A549 (cell line): ENCODE measurements at regions of chr3 and their contacts with region 1.

Region 1: DNA sequence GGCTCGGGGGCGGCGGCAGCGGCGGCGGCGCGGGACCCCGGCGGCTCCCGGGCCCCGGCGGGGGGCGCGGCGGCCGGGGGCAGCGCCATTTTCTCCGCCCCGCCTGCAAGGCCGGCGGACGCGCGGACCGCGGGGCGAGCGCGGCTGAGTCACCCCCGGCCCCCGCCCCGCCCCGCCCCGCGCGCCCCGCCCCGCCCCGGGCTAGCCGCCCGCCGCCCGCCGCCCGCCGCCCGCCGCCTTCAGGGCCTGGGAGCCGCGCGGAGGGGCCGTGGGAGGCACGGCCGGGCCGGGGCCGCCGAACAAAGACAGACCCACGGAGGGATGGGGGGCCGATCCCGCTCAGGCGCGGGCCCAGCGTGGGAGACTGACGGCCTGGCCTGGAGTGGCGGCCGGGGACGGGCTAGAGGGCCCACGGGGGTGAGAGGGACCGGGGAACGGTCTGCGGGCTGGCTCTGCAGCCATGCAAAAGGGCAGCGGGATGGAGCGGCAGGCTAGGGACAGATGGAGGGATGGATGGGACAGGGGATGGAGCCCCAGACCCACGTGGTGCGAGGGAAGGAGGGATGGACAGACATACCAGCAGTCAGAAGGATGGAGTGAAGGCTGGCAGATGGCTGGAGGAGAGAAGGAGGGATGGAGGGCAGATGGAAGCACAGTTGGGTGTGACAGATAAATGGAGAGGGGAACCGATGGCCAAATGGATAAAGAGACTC is at the start of gene EIF4E3:
- DNase-seq: peak in 1 of 2 experiments; percentile 54
- ATAC-seq: peak; percentile 51 to 69
- H3K4me3 ChIP-seq: peak within 1 kb of the TSS; percentile 83
- H3K27ac ChIP-seq: peak within 1 kb of the TSS; percentile 82 to 90
- H3K4me1 ChIP-seq: peaks cover 7% of the 10 kb centered on the region
- CTCF ChIP-seq: no peak
- EP300 ChIP-seq: no peak
- POLR2A ChIP-seq: no peak
- RAD21 ChIP-seq: no peak
- polyA plus RNA-seq, gene EIF4E3: 4.6 and 5.5 TPM in 2 replicates

Region 2: DNA sequence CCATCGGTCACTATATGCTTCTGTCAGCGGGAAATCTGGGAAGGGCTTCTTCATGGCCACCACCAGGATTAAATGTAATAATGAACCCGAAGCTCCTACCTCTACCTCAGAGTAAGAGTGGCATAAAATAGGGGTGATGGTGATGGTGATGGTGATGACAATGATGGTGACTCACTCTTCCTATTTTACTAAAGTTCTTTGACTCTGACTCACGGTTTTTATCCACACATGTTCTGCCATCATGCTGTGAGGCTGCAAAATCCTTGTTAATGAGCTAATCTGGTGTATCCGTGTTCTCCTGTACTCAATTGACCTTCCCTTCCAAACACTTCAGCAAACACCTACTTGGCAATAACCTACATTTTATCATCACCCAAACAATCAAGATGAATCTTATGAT is 123.6 kb before region 1 on chr3:
- CTCF ChIA-PET with region 1: no interaction called
- POLR2A ChIA-PET with region 1: no interaction called
- DNase-seq: peak in 1 of 2 experiments; percentile 7
- ATAC-seq: no peak
- H3K4me3 ChIP-seq: no peak overlapping the region
- H3K27ac ChIP-seq: 0 out of 6 replicates have a peak overlapping the region, but pooled peaks of 1 of the 2 experiments have one; percentile 3
- H3K4me1 ChIP-seq: peaks cover 17% of the 10 kb centered on the region
- CTCF ChIP-seq: no peak
- EP300 ChIP-seq: no peak
- POLR2A ChIP-seq: no peak
- RAD21 ChIP-seq: no peak

Region 3: GRCh38 chr3:71702131-71703024 is 23.1 kb before region 1 on chr3:
- CTCF ChIA-PET with region 1: interaction called, 21 read pairs
- POLR2A ChIA-PET with region 1: no interaction called
- DNase-seq: no peak
- ATAC-seq: no peak
- H3K4me3 ChIP-seq: no peak overlapping the region
- H3K27ac ChIP-seq: no peak overlapping the region
- H3K4me1 ChIP-seq: peaks cover 4% of the 10 kb centered on the region
- CTCF ChIP-seq: no peak
- EP300 ChIP-seq: no peak
- POLR2A ChIP-seq: no peak
- RAD21 ChIP-seq: no peak

Region 4: GRCh38 chr3:71710906-71711494 is 14.4 kb before region 1 on chr3:
- CTCF ChIA-PET with region 1: interaction called, 17 read pairs
- POLR2A ChIA-PET with region 1: no interaction called
- DNase-seq: peak; percentile 51 to 70
- ATAC-seq: peak; percentile 70 to 90; a peak in 4 of 6 replicates
- H3K4me3 ChIP-seq: no peak overlapping the region
- H3K27ac ChIP-seq: no peak overlapping the region
- H3K4me1 ChIP-seq: peaks cover 16% of the 10 kb centered on the region
- CTCF ChIP-seq: peak; percentile 77
- EP300 ChIP-seq: no peak
- POLR2A ChIP-seq: no peak
- RAD21 ChIP-seq: peak; percentile 77 to 79

Region 5: GRCh38 chr3:71859123-71859519 is 133.7 kb after region 1 on chr3:
- CTCF ChIA-PET with region 1: interaction called, 19 read pairs
- POLR2A ChIA-PET with region 1: no interaction called
- DNase-seq: peak; percentile 11 to 42
- ATAC-seq: peak; percentile 64 to 69; a peak in 3 of 6 replicates
- H3K4me3 ChIP-seq: no peak overlapping the region
- H3K27ac ChIP-seq: no peak overlapping the region
- H3K4me1 ChIP-seq: no peaks in the 10 kb centered on the region
- CTCF ChIP-seq: peak; percentile 40
- EP300 ChIP-seq: no peak
- POLR2A ChIP-seq: no peak
- RAD21 ChIP-seq: peak; percentile 56 to 64

Region 6: DNA sequence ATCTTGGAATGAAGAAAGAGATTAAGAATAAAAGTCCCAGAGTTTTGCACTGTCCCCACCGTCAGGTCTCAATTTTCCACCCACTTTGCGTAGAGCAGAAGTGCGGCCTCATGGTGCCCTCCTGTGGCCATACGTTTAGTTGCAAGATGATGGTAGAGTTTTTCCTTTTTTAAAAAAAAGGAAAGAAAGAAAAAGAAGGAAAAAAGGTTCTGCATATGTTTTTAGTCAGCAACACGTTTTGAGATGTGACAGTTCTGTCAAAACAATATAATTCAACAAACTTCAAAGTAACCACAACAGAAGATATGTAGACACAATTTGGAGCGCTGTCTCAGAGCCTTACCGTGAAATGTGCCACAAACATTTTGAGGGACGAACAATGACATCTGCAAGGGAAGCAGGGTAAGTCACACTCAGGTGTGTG is 1360.6 kb after region 1 on chr3:
- CTCF ChIA-PET with region 1: interaction called, 15 read pairs
- POLR2A ChIA-PET with region 1: no interaction called
- DNase-seq: peak; percentile 28 to 42
- ATAC-seq: peak; percentile 71 to 85; a peak in 5 of 6 replicates
- H3K4me3 ChIP-seq: no peak overlapping the region
- H3K27ac ChIP-seq: no peak overlapping the region
- H3K4me1 ChIP-seq: no peaks in the 10 kb centered on the region
- CTCF ChIP-seq: peak; percentile 94
- EP300 ChIP-seq: no peak
- POLR2A ChIP-seq: no peak
- RAD21 ChIP-seq: peak; percentile 94 to 95